Activated naive CD8-positive, alpha-beta T cell treated with anti-CD3 and anti-CD28 coated beads, Interleukin-2, amount 10 ng/mL, durations not matched to agents 7 days and 5 days (primary cell): ENCODE measurements at regions of chr10 and their contacts with region 1.

Region 1: GRCh38 chr10:131900350-131901146 is at the start of gene PPP2R2D:
- DNase-seq: peak; percentile 98
- ATAC-seq: peak; percentile 81
- H3K4me3 Mint-ChIP-seq: peak within 1 kb of the TSS; percentile 89
- H3K27ac Mint-ChIP-seq: peak within 1 kb of the TSS; percentile 88
- H3K4me1 Mint-ChIP-seq: peaks cover 63% of the 10 kb centered on the region
- H3K27me3 Mint-ChIP-seq: peaks cover 13% of the 10 kb centered on the region
- total RNA-seq, gene PPP2R2D: 39.9 to 45.6 TPM

Region 2: DNA sequence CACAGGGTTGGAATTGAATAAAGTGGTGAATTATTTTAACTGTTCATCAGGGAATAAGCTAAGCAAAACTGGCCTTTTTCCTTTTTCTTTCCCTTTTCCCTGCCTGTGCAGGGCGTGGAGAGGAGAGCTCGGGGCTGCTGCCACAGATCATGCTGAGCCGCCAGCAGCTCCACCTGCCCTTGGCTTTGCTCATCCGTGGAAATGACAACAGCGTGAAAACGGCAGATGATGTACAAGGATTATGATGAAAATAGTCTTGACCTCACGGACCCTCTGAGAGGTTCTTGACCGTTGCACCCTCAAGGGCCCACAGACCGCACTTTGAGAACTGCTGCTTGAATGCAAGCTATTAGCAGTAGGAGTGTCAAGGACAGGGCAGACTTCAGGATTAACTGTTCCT is 10.9 kb after region 1 on chr10:
- POLR2A ChIA-PET with region 1: interaction called, 11 read pairs
- DNase-seq: no peak
- ATAC-seq: no peak
- H3K4me3 Mint-ChIP-seq: no peak overlapping the region
- H3K27ac Mint-ChIP-seq: no peak overlapping the region
- H3K4me1 Mint-ChIP-seq: peaks cover 35% of the 10 kb centered on the region
- H3K27me3 Mint-ChIP-seq: no peaks in the 10 kb centered on the region

Region 3: GRCh38 chr10:131981429-131982184 is 81.1 kb after region 1 on chr10 and contains the start of gene BNIP3:
- POLR2A ChIA-PET with region 1: interaction called, 11 read pairs
- DNase-seq: peak; percentile 92
- ATAC-seq: peak; percentile 85
- H3K4me3 Mint-ChIP-seq: peak within 1 kb of the TSS; percentile 84
- H3K27ac Mint-ChIP-seq: peak within 1 kb of the TSS; percentile 68
- H3K4me1 Mint-ChIP-seq: peaks cover 39% of the 10 kb centered on the region
- H3K27me3 Mint-ChIP-seq: peaks cover 19% of the 10 kb centered on the region
- total RNA-seq, gene BNIP3: 67.0 to 69.4 TPM

Region 4: DNA sequence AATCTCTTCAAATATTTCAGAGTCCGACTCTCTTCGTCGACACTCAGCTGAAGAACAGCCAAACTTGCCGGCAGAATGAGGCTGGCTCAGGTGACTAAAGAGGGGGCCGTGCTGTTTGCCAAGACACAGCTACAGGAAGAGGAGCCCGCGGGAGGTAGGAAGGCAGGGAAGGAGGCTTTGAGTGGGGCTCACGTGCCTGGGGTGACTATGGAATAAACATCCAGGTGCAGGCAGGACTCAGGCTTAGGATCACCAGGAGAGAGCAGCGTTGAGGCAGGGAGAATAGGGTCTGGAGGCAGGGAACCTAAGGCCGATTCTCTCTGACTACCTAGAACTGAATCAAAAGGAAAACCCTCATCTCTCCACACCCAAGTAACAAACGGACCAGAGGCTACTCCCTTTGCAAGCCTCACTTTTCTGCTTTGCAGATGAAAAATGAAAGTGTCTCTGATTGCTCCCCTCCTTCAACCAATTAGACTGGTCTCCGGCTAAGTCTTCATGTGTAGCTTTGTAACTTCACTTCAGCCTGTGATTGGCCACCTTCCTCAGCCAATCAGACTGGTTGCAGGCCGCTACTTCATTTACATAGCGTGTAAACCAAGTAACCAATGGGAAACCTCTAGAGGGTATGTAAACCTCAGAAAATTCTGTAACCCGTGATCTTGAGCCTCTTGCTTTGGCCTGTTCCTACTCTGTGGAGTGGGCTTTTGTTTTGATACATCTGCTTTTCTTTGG is 100.9 kb after region 1 on chr10:
- POLR2A ChIA-PET with region 1: no interaction called
- DNase-seq: no peak
- ATAC-seq: peak; percentile 45
- H3K4me3 Mint-ChIP-seq: no peak overlapping the region
- H3K27ac Mint-ChIP-seq: no peak overlapping the region
- H3K4me1 Mint-ChIP-seq: peaks cover 3% of the 10 kb centered on the region
- H3K27me3 Mint-ChIP-seq: peaks cover 7% of the 10 kb centered on the region

Region 5: DNA sequence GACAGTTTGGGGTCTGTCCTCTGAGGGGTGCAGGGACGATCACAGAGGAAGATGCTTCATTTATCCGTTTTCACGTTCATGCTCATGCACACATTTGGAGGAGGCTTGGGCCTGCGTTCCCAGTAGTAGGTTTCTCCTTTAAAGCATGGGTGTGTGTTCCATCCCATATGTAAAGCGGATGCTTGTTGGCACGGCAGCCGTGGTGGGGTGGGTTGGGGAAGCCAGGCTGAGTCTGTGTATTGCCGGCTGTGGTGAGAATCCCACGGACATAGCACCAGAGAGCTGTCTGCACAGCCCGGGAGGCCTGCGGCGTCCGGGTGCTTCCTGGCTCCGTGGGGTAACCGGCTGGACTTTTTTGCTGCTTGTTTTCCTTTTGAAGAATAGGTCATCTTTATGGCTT is 165.6 kb after region 1 on chr10:
- POLR2A ChIA-PET with region 1: no interaction called
- DNase-seq: no peak
- ATAC-seq: no peak
- H3K4me3 Mint-ChIP-seq: peak overlapping the region; percentile 77
- H3K27ac Mint-ChIP-seq: no peak overlapping the region
- H3K4me1 Mint-ChIP-seq: peaks cover 4% of the 10 kb centered on the region
- H3K27me3 Mint-ChIP-seq: peaks cover 6% of the 10 kb centered on the region